Activated CD4-positive, alpha-beta T cell treated with anti-CD3 and anti-CD28 coated beads, Interleukin-2, amount 10 ng/mL, durations not matched to agents 24 days and 14 days (primary cell): ENCODE measurements at regions of chr5 and their contacts with region 1.

Region 1: DNA sequence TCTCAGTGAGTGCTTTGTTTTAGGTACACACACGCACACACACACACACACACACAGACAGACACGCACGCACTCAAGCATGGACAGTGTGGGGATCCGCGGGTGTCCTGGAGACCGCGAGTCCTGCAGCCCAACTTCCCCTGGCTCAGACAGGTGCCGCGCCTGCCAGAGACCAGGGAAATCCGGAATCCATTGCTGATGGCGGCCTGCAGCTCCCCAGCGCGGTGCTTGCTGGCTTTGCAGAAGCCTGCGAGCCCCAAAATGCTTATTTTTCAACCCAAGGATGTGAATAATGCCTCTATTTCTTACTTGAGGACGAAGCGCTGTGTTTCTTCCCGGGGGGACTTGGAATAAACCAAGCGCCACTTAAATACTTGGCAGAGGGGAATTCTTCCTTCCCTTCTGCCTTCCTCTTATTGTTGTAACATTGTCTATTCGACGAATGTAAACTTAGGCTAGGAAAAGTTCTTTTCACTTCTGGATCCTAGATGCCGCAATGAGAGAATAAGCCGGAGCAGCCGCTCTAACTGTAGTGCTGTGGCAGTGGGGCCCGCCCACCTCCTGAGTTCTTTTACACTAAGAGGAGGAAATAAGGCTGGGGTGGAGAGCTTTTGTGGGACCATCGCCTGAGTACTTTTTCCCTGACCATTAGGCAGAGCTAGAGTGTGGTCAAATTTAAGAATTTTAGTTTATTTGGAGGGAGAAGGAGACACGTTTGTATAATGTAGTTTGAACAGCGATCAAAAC is 802 bp downstream of the ITGA2 start:
- DNase-seq: peak; percentile 85
- H3K4me3 Mint-ChIP-seq: peak overlapping the region; percentile 84
- H3K27ac Mint-ChIP-seq: peak overlapping the region; percentile 66
- H3K4me1 Mint-ChIP-seq: peaks cover 44% of the 10 kb centered on the region
- H3K27me3 Mint-ChIP-seq: peaks cover 1% of the 10 kb centered on the region

Region 2: DNA sequence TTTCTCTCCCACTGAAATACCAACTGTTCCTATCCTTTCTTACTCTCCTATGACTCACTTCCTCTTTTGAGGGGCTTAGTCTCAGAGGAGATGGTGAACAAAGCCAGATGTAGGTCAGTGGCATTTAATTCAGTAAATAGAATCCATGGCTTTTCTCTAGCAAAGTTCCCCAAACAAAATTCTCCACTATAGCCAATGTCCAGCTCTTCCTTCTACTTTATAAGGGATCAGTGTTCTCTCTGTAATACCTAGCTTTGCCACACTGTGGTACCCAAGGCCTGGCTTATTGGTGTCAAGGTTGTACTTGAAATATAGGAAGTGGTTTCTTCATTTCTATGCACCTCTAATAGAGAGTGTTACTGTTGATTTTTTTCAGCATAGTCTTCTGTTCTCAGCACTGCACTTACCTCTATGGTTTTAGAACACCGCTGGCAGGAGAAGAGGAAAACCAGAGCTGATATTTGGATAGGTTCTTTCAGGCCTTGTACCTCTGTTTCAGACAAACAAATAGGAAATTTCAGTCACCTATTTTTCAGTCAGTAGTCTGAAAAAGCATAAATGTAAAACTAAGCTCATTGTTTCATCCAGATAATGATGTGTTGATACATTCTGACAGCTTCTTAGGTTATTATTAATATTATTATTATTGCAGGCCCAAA is 41.4 kb before region 1 on chr5:
- intact Hi-C with region 1: loop called (anchors 1 kb)
- DNase-seq: peak; percentile 92
- H3K4me3 Mint-ChIP-seq: no peak overlapping the region
- H3K27ac Mint-ChIP-seq: peak overlapping the region; percentile 46
- H3K4me1 Mint-ChIP-seq: peaks cover 19% of the 10 kb centered on the region
- H3K27me3 Mint-ChIP-seq: peaks cover 1% of the 10 kb centered on the region

Region 3: DNA sequence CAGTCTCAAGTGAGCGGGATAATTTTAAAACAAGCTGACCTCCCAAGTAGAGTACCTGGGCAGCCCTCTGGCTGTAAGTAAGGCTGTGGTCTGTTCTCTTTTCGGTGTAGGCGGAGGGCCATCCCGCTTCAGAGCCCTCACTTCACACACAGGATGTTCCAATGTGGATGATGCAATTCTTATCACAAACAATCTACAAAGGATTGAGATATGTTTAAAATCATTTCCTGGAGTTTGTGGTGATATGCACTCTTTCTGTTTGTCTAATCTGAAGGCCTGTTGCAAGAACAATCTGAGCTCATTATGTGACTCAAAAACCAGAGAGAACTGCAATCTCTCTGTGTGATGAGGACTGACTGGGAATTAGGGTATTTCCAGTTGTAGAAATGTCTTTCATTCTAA is 41.7 kb after region 1 on chr5:
- intact Hi-C with region 1: loop called (anchors 1 kb)
- DNase-seq: peak; percentile 86
- H3K4me3 Mint-ChIP-seq: peak overlapping the region; percentile 53
- H3K27ac Mint-ChIP-seq: peak overlapping the region; percentile 80
- H3K4me1 Mint-ChIP-seq: peaks cover 57% of the 10 kb centered on the region
- H3K27me3 Mint-ChIP-seq: no peaks in the 10 kb centered on the region

Region 4: GRCh38 chr5:53041071-53041692 is 51.2 kb after region 1 on chr5:
- intact Hi-C with region 1: loop called (anchors 1 kb)
- DNase-seq: peak; percentile 81
- H3K4me3 Mint-ChIP-seq: peak overlapping the region; percentile 76
- H3K27ac Mint-ChIP-seq: peak overlapping the region; percentile 82
- H3K4me1 Mint-ChIP-seq: peaks cover 65% of the 10 kb centered on the region
- H3K27me3 Mint-ChIP-seq: no peaks in the 10 kb centered on the region

Region 5: GRCh38 chr5:53095931-53096525 is 106.1 kb after region 1 on chr5:
- intact Hi-C with region 1: loop called (anchors 2 kb)
- DNase-seq: peak; percentile 92
- H3K4me3 Mint-ChIP-seq: no peak overlapping the region
- H3K27ac Mint-ChIP-seq: no peak overlapping the region
- H3K4me1 Mint-ChIP-seq: peaks cover 22% of the 10 kb centered on the region
- H3K27me3 Mint-ChIP-seq: no peaks in the 10 kb centered on the region